PC-3 (cell line): ENCODE measurements at regions of chr1 and their contacts with region 1.

Region 1: DNA sequence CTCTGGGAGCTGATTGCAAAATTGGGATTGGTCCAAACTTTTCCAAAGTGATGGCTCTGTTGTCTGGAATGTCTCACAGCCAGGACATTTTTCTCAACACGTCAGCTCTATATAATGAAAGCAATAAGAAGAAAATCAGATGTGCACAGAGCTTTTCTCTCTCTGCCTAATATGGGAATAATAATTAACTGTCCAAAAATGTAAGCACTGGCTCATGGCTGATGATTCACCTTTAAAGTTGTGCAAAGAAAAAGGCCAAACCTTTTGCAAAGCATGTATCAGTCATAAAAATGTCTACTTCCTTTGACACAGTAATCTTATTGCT is 30.4 kb downstream of the ZNF281 start:
- DNase-seq: peak; percentile 99
- ATAC-seq: peak; percentile 87
- H3K4me3 ChIP-seq: peak overlapping the region; percentile 32; the same call in 1 of the 2 replicates
- H3K27ac ChIP-seq: peak overlapping the region; percentile 73
- H3K4me1 ChIP-seq: peaks cover 51% of the 10 kb centered on the region
- H3K27me3 ChIP-seq: no peaks in the 10 kb centered on the region
- CTCF ChIP-seq: no peak

Region 2: GRCh38 chr1:200206340-200206739 is 173.1 kb before region 1 on chr1:
- CTCF ChIA-PET with region 1: no interaction called
- POLR2A ChIA-PET with region 1: interaction called, 14 read pairs
- intact Hi-C with region 1: no loop called
- DNase-seq: peak; percentile 97
- ATAC-seq: peak; percentile 83
- H3K4me3 ChIP-seq: peak overlapping the region; percentile 3; the same call in 1 of the 2 replicates
- H3K27ac ChIP-seq: peak overlapping the region; percentile 77
- H3K4me1 ChIP-seq: peaks cover 29% of the 10 kb centered on the region
- H3K27me3 ChIP-seq: no peaks in the 10 kb centered on the region
- CTCF ChIP-seq: no peak

Region 3: GRCh38 chr1:200336111-200336845 is 43.1 kb before region 1 on chr1:
- CTCF ChIA-PET with region 1: no interaction called
- POLR2A ChIA-PET with region 1: interaction called, 3 read pairs
- intact Hi-C with region 1: loop called (anchors 1 kb)
- DNase-seq: peak; percentile 98
- ATAC-seq: peak; percentile 82
- H3K4me3 ChIP-seq: no peak overlapping the region; the same call in 1 of the 2 replicates
- H3K27ac ChIP-seq: peak overlapping the region; percentile 39
- H3K4me1 ChIP-seq: peaks cover 34% of the 10 kb centered on the region
- H3K27me3 ChIP-seq: no peaks in the 10 kb centered on the region
- CTCF ChIP-seq: no peak

Region 4: GRCh38 chr1:200399860-200400259 is 20.5 kb after region 1 on chr1:
- CTCF ChIA-PET with region 1: no interaction called
- POLR2A ChIA-PET with region 1: no interaction called
- intact Hi-C with region 1: loop called (anchors 2 kb)
- DNase-seq: no peak
- ATAC-seq: peak; percentile 43
- H3K4me3 ChIP-seq: no peak overlapping the region
- H3K27ac ChIP-seq: no peak overlapping the region
- H3K4me1 ChIP-seq: peaks cover 7% of the 10 kb centered on the region
- H3K27me3 ChIP-seq: no peaks in the 10 kb centered on the region
- CTCF ChIP-seq: no peak

Region 5: DNA sequence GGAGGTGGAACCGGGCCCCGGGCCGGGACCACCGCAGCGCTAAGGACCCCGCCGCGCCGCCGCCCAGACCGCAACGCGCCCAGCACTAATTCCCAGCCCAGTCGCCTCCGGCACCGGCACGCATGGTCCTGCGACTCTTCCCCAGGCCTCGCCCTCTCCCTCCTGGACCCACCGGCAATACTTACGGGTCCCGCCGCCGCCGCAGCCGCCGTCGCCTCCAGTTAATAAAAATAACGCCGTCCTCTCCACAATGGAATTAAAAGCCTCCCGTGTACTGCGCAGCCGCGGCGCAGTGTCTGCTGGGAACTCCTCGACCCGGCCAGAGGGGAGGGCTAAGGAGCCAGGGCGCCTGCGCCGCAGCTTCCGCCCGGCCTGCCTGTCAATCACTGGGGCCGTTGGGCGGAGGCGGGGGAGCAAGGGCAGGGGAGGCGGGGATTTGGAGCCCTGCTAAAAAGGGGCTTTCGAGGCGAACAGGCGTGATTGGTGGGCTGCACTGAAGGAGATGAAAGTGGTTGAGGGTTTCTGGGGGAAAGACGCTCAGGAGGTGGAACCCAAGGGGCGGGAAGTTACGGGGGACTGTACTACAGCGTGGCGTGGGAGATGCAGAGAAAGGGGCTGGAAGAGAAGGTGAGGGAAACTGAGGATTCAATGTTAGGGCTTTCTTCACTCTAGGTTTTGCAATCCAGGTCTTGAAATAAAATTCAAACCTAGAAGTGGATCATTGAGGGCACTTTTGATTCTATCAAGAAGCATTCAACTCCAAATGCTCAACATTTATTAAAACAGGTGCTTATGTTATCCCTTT is 30.6 kb after region 1 on chr1 and contains the start of gene ZNF281:
- CTCF ChIA-PET with region 1: no interaction called
- POLR2A ChIA-PET with region 1: interaction called, 4 read pairs
- intact Hi-C with region 1: loop called (anchors 2 kb)
- DNase-seq: peak; percentile 99
- ATAC-seq: peak; percentile 96
- H3K4me3 ChIP-seq: peak within 1 kb of the TSS; percentile 85
- H3K27ac ChIP-seq: peak within 1 kb of the TSS; percentile 48
- H3K4me1 ChIP-seq: peaks cover 60% of the 10 kb centered on the region
- H3K27me3 ChIP-seq: no peaks in the 10 kb centered on the region
- CTCF ChIP-seq: no peak
- total RNA-seq, gene ZNF281: 23.3 and 26.6 TPM in 2 replicates